PC-3 (cell line): ENCODE measurements at regions of chr10 and their contacts with region 1.

Region 1: DNA sequence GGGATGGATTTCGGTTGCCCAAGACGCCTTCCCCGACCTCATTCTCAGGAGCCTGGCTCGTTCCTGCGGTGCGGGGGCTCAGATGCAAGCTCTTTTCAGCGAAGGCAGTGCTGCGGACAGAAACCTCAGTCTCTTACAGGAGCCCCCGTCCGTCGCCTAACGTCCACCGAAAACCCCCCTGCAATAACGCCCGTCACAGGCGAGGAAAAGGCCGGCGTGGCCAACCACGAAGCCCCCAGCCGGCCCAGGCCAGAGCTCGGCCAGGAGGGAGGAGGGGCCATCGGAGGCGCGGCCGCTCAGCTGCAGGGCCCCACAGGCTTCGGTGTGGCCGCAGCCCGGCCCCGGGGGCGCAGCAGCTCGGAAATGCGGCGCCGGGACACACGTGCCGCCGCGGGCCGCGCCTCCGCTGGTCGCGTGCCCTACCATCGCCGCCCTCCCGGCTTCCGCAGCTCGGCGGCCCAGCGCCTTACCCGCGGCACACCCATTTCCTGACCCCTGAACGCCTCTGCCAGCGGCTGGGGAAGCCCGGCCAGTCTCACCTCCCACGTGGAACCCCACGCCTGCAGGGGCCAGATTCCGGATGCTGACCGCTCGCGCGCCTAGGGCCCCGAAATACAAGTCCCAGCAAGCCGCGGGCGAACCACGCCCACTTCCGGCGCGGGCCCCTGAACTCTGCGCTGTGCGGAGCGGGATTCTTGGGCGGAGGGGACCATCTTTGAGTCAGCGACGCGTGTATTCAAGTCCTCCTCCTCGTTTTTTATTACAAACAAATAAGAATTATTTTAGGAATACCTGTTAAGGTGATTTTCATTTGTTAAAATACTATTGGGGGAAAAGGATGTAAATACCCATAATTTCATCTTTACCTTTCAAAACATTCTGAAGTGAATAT is at the start of gene ZNF239:
- DNase-seq: peak; percentile 86
- ATAC-seq: peak; percentile 93
- H3K4me3 ChIP-seq: peak within 1 kb of the TSS; percentile 73
- H3K27ac ChIP-seq: peak within 1 kb of the TSS; percentile 25; the same call in 1 of the 2 replicates
- H3K4me1 ChIP-seq: peaks cover 19% of the 10 kb centered on the region
- H3K27me3 ChIP-seq: no peaks in the 10 kb centered on the region
- CTCF ChIP-seq: no peak
- total RNA-seq, gene ZNF239: 8.5 and 9.7 TPM in 2 replicates

Region 2: GRCh38 chr10:42776681-42777080 is 797.6 kb before region 1 on chr10:
- CTCF ChIA-PET with region 1: no interaction called
- POLR2A ChIA-PET with region 1: no interaction called
- intact Hi-C with region 1: no loop called
- DNase-seq: no peak
- ATAC-seq: no peak
- H3K4me3 ChIP-seq: no peak overlapping the region
- H3K27ac ChIP-seq: no peak overlapping the region
- H3K4me1 ChIP-seq: 0 out of 2 replicates have a peak, but pooled peaks cover under 1% of the 10 kb centered on the region
- H3K27me3 ChIP-seq: peaks cover 14% of the 10 kb centered on the region; the same call in 1 of the 2 replicates
- CTCF ChIP-seq: no peak

Region 3: DNA sequence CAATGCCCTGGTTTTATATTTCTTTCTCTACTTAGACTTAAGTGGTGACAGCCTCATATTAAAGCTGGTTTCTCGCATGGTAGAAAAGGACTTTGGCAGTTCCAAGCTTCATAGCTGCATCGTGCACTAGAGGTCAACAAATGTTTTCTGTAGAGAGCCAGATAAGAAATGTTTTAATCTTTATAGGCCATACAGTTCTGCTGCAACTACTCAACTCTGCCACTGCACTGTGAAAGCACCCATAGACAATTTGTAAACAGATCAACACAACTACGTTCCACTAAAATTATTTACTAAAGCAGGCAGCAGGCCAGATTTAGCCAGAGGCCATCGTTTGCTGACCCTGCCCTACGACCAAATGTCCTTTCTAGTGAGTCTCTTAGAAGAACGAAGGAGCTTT is 399.3 kb before region 1 on chr10:
- CTCF ChIA-PET with region 1: no interaction called
- POLR2A ChIA-PET with region 1: no interaction called
- intact Hi-C with region 1: no loop called
- DNase-seq: no peak
- ATAC-seq: no peak
- H3K4me3 ChIP-seq: no peak overlapping the region
- H3K27ac ChIP-seq: no peak overlapping the region
- H3K4me1 ChIP-seq: no peaks in the 10 kb centered on the region
- H3K27me3 ChIP-seq: no peaks in the 10 kb centered on the region
- CTCF ChIP-seq: no peak

Region 4: DNA sequence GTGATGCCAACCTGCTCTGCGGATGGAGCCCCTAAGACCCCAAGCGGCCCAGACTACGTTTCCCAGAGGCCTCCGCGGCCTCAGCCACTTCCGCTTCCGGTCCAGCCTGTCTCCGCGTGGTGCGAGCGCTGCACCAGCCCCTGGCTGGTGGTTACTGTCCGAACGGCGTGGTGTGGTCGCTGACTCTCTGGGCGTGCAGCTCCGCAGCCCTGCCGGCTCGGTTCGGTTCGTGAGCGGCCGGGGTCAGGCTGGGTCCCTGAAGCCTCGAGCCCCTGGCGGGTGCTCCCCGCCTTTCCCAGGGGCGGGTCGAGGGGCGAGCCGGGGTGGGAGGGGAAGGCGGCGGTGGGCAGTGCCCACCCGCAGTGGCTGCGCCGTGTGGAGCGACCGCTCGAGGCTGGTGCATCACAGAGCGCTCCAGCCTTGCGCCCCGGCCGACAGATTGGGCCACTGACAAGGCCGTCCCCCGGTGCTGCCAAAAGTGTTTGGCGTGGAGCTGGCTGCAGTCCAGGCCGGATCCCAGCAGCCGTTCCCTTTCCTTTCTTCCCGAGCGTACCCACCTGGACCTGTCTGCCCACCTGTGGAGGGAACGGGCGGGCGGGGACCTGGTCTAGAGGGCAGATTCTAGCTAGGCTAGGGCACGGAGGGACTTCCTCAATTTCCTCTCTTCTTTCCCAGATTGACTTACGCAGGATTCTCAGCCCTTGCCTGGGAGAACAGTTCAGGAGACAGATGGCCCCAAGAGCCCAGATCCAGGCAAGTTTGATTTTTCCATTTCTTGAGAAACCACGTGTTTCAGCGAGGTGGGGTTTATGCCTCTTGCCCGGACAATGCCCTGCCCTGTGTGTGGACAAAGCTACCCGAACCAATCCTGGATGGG is 32.3 kb after region 1 on chr10 and contains the start of gene ZNF485:
- CTCF ChIA-PET with region 1: no interaction called
- POLR2A ChIA-PET with region 1: no interaction called
- intact Hi-C with region 1: loop called (anchors 1 kb)
- DNase-seq: peak; percentile 69
- ATAC-seq: peak; percentile 97
- H3K4me3 ChIP-seq: peak within 1 kb of the TSS; percentile 77
- H3K27ac ChIP-seq: peak within 1 kb of the TSS; percentile 19; the same call in 1 of the 2 replicates
- H3K4me1 ChIP-seq: peaks cover 9% of the 10 kb centered on the region
- H3K27me3 ChIP-seq: no peaks in the 10 kb centered on the region
- CTCF ChIP-seq: no peak; the same call in none of the 2 replicates
- total RNA-seq, gene ZNF485: 1.2 and 1.3 TPM in 2 replicates

Region 5: GRCh38 chr10:43648398-43649184 is 74.3 kb after region 1 on chr10 and contains the start of gene ZNF32:
- CTCF ChIA-PET with region 1: no interaction called
- POLR2A ChIA-PET with region 1: no interaction called
- intact Hi-C with region 1: loop called (anchors 2 kb)
- DNase-seq: peak; percentile 92
- ATAC-seq: peak; percentile 100
- H3K4me3 ChIP-seq: peak within 1 kb of the TSS; percentile 80
- H3K27ac ChIP-seq: no peak within 1 kb of the TSS
- H3K4me1 ChIP-seq: peaks cover 10% of the 10 kb centered on the region; the same call in 1 of the 2 replicates
- H3K27me3 ChIP-seq: no peaks in the 10 kb centered on the region; the same call in 1 of the 2 replicates
- CTCF ChIP-seq: no peak
- total RNA-seq, gene ZNF32: 14.3 and 16.7 TPM in 2 replicates